HEK293 (cell line): ENCODE measurements at regions of chr4 and their contacts with region 1.

Region 1: DNA sequence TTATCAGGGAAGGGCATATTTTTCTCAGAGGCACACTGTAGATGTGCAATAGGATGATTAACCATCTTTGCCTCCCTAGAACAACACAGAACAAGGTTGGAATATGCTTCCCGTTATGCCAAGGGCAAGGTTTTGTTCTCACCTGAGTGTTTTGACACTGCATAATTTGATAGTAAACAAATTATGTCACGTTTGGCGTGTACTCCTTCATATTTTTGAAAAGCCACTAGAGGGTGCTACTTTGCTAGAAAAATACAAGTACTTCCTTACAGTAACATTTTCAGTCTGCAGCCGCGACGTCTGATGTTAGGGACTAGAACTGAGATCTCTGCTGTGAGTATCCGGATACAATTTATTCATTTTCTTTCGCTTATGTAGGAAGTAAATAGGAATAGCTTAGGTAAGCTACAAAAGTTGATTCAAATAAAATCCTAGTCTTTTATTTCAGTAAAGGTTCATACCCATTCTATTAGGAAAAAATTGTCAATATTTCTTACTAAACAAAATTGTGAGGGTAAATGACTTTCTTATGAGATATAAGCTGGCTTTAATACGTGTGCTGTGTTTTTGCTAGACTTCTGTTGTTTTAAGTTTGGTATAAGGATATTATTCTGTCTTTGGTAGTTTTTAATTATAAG is 181.1 kb upstream of the WDFY3 start:
- H3K4me3 ChIP-seq: no peak overlapping the region
- H3K27ac ChIP-seq: no peak overlapping the region
- H3K4me1 ChIP-seq: no peaks in the 10 kb centered on the region
- CTCF ChIP-seq: no peak

Region 2: DNA sequence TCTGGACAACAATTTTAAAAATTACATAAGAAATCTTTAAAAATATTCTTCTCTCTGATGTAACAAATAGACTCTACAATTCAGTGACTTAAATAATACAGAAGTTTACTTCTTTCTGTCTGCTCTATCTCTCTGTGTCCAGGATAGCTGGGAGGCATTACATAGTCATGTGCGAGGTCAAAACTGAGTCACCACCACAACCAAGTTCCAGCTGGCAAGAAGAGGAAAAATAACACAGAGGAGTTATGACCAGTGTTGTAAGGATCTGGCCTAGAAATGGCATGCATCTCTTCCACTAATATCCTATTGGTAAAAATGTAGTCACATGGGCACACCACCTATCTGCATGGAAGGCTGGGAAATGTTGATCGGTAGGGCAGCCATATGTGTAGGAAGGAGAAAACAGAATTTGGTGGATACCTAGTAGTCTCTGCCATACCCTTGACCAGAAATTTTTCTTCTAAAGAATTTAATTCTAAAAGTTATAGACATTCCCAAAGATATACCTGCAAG is 141.6 kb before region 1 on chr4:
- CTCF ChIA-PET with region 1: no interaction called
- POLR2A ChIA-PET with region 1: no interaction called
- H3K4me3 ChIP-seq: no peak overlapping the region
- H3K27ac ChIP-seq: no peak overlapping the region
- H3K4me1 ChIP-seq: no peaks in the 10 kb centered on the region
- CTCF ChIP-seq: no peak

Region 3: DNA sequence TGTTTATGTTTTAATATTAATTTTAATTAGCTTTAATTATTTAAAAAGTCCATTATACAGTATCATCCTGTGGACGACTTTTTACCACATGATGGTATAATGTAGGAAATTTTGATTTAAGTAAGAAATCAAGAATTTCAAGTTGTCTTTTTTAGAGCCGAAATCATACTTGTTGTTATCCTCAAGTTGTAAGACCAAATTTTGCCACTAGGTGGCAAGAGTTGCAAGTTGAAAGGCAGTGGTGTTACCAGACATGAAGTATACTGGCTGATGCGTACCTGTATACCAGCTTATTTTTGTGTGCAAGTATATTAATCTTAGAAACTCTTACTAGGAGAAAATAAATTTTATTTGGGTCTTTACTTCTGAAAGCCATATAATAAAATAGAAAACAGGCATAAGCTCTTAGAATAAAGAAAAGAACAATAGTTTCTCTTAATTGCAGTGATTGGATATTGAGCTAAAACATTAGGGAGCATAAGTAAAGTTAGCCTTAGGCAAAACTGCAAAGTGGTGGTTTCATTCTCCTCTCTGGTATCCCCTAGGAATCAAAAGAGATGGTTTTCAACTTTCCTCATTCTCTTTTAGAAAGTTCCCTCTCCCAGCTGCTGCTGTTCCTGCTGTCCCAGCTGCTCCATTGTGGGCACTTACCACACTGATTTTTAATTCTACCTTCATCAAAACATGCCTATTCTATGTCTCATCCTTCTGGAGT is 63.0 kb before region 1 on chr4:
- CTCF ChIA-PET with region 1: interaction called, 12 read pairs
- POLR2A ChIA-PET with region 1: no interaction called
- H3K4me3 ChIP-seq: no peak overlapping the region
- H3K27ac ChIP-seq: no peak overlapping the region
- H3K4me1 ChIP-seq: no peaks in the 10 kb centered on the region
- CTCF ChIP-seq: no peak

Region 4: GRCh38 chr4:85113706-85114105 is 33.9 kb before region 1 on chr4:
- CTCF ChIA-PET with region 1: no interaction called
- POLR2A ChIA-PET with region 1: no interaction called
- H3K4me3 ChIP-seq: no peak overlapping the region
- H3K27ac ChIP-seq: no peak overlapping the region
- H3K4me1 ChIP-seq: no peaks in the 10 kb centered on the region
- CTCF ChIP-seq: no peak

Region 5: DNA sequence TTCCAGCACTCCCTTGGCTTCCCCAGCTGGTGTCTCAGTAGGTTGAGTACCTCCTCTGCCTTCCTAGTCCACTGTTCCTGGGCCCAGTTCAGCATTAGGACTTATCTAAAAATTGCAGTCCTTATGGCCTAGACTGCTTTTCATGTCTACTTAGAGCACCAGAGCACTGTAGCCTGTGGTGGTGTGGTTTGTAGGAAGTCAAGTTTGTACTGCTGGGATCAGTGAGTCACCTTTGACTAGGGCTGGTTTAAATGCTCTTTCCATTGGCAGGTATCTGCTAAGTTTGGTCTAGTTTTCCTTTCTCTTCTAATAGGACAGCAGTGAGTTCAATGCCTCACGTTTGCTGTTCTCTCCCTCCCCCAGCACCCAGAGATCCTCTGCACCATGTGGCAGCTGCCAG is 52.5 kb after region 1 on chr4:
- CTCF ChIA-PET with region 1: no interaction called
- POLR2A ChIA-PET with region 1: no interaction called
- H3K4me3 ChIP-seq: no peak overlapping the region
- H3K27ac ChIP-seq: no peak overlapping the region
- H3K4me1 ChIP-seq: no peaks in the 10 kb centered on the region
- CTCF ChIP-seq: no peak

Region 6: DNA sequence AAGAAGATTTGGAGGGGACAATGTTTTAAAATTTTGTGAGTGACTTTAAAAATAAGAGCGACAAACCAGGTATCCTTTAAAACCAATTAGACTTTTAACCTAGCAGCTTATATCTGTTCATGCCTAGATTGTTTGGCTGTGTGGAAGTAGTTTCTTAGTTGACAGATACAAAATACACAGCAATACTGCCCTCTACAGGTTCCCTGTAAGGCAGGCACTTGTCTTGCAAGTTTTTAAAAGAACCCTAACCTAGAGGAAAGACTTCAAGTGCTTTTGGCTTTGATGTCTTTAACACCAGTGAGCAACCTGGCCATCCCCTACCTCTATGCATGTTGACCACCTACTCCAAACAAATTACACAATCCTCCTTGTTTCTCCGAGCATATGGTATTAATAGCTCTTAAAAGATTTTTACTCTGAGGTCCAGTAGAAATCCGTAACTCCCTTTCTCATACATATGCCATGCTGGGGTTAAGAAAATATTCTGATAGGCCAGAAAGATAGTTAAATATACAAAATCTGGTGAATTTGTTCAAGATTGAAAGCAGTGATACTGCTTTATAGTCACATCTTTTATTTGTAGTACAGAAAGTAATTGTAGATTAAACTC is 600.4 kb after region 1 on chr4:
- CTCF ChIA-PET with region 1: interaction called, 11 read pairs
- POLR2A ChIA-PET with region 1: no interaction called
- H3K4me3 ChIP-seq: no peak overlapping the region
- H3K27ac ChIP-seq: no peak overlapping the region
- H3K4me1 ChIP-seq: 0 out of 2 replicates have a peak, but pooled peaks cover 2% of the 10 kb centered on the region
- CTCF ChIP-seq: no peak